Psoas muscle (tissue), 8 donors: ENCODE measurements at regions of chr7 and their contacts with region 1.

Region 1: GRCh38 chr7:127365164-127365956 is 27.1 kb downstream of the ZNF800 start:
- DNase-seq: no peak
- ATAC-seq: no peak
- H3K4me3 ChIP-seq: no peak overlapping the region
- H3K27ac ChIP-seq: no peak overlapping the region
- H3K4me1 ChIP-seq: no peaks in the 10 kb centered on the region
- H3K27me3 ChIP-seq: no peaks in the 10 kb centered on the region
- CTCF ChIP-seq: no peak

Region 2: DNA sequence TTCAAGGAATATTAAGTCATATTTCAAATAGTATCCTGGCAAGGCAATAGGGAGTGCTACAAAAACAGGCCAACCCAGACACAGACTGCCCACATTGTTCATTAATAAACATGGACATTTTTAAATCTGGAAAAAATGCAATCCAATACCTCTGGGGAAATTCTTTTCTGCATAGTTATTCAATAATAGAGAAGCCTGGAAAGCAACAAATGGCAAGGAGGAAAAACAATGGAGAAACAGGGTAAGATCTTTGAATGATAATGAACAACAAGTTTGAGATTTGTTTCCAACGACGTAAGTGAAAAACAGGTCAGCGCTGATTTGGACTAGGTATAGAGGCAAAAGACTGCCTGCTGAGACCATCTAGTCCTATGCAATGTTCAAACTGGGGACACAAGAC is 71.9 kb after region 1 on chr7:
- intact Hi-C with region 1: no loop called
- DNase-seq: no peak
- ATAC-seq: no peak
- H3K4me3 ChIP-seq: no peak overlapping the region
- H3K27ac ChIP-seq: no peak overlapping the region
- H3K4me1 ChIP-seq: no peaks in the 10 kb centered on the region
- H3K27me3 ChIP-seq: no peaks in the 10 kb centered on the region
- CTCF ChIP-seq: no peak

Region 3: GRCh38 chr7:127447326-127447945 is 82.1 kb after region 1 on chr7:
- intact Hi-C with region 1: no loop called
- DNase-seq: no peak
- ATAC-seq: no peak
- H3K4me3 ChIP-seq: no peak overlapping the region
- H3K27ac ChIP-seq: no peak overlapping the region
- H3K4me1 ChIP-seq: no peaks in the 10 kb centered on the region
- H3K27me3 ChIP-seq: no peaks in the 10 kb centered on the region
- CTCF ChIP-seq: peak; percentile 28

Region 4: DNA sequence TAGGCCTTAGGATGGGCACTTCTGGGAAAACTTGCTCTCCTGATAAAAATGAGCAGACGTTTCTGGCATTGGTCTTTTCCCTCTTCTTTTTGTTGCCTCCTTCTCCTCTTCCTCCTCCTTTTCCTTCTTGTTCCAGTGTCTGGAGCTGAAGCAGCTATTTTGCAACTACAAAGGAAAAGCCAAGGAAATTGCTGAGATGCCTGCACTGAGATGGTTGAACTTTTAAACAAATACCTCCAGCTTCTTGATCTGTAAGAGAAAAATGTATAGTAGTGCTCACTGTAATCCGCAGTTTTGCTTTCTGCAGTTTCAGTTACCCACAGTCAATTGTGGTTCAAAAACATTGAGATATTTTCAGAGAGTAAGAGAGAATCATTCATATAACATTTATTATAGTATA is 279.1 kb after region 1 on chr7:
- intact Hi-C with region 1: loop called in 1 of 2 experiments (anchors 10 kb)
- DNase-seq: no peak
- ATAC-seq: no peak
- H3K4me3 ChIP-seq: no peak overlapping the region
- H3K27ac ChIP-seq: no peak overlapping the region
- H3K4me1 ChIP-seq: no peaks in the 10 kb centered on the region
- H3K27me3 ChIP-seq: peaks cover 0 to 2% (median 0%) of the 10 kb centered on the region in 3 donors
- CTCF ChIP-seq: no peak